ENCODE measurements at regions of chr9 and their contacts with region 1.

Region 1: GRCh38 chr9:132973713-132974112 is 4.8 kb upstream of the GFI1B start:
- DNase-seq: peak; percentile 45 to 56
- ATAC-seq: peak in 1 of 2 experiments; percentile 43; a peak in 3 of 6 replicates
- H3K4me3 ChIP-seq: no peak overlapping the region
- H3K27ac ChIP-seq: no peak overlapping the region
- H3K4me1 ChIP-seq: peaks cover 8% of the 10 kb centered on the region; the same call in 1 of the 3 replicates
- CTCF ChIP-seq: no peak
- EP300 ChIP-seq: no peak
- POLR2A ChIP-seq: no peak
- RAD21 ChIP-seq: no peak

Region 2: DNA sequence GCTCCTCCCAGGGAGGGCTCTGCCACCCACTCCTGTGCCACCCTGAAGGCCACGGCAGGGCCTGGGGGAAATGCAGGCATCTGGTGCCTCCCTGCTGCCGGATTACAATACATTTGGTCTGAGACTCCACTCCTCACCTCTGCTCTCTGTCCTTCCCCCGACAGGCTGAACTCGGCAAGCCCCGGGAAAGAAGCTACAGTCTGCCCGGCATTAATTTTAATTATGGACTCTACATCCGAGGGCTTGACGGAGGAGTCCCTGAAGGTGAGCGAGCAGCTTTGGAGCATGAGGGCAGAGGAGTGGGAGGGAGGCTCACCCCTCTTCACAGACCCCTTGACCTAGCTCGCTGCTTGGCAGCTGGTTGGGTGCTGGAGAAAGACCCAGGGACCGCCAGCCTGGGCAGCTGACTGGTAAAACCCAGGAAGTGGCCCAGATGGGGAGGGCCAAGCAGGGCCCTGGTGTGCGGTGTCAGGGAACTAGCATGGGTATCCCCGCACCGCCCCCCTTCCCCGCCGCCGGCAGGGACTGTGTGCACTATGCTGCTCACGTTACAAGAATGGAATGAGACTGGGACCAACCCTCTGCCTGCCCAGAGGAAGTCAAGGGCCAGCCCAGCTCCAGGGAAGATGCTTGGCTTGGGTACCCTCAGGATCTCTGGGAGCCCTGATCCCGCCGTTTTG is 475.0 kb before region 1 on chr9:
- CTCF ChIA-PET with region 1: no interaction called
- POLR2A ChIA-PET with region 1: no interaction called
- DNase-seq: no peak
- ATAC-seq: no peak; a peak in 2 of 6 replicates
- H3K4me3 ChIP-seq: no peak overlapping the region
- H3K27ac ChIP-seq: no peak overlapping the region
- H3K4me1 ChIP-seq: no peaks in the 10 kb centered on the region
- CTCF ChIP-seq: no peak
- EP300 ChIP-seq: no peak
- POLR2A ChIP-seq: no peak
- RAD21 ChIP-seq: no peak

Region 3: DNA sequence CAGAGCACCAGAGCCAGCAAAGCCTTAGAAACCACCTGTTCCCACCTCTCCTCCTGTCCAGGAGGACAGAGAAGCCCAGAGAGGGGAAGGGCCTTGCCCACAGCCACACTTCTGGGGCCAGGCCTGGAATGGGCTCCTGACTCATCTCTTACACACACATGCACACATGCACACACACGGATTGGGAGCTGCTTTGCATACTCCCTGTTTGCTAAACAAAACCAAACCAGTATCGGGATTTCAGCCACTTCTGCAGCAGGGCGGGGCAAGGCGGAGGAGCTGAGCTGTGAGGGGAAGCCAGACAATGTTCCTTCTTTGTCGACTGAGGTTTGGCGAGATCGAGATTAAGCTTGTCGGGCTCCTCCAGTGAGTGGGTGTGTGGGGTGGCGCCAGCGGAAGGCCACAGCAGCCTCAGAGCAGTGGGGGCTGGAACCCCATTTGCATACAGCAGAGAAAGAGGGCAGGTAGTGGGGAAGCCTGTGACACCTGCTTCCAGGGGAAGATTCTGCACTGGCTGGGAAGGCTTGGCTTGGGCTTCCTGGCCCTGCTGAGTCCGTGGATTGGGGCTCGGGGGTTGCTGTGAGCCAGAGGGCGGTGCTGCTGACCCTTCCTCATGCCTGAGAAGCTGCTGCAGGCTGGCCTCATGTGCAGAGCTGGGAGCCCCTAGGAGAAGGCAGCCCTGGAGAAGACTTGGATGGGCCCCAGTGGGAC is 20.9 kb after region 1 on chr9:
- CTCF ChIA-PET with region 1: interaction called, 40 read pairs
- POLR2A ChIA-PET with region 1: no interaction called
- DNase-seq: peak in 1 of 2 experiments; percentile 29
- ATAC-seq: peak in 1 of 2 experiments; percentile 29; a peak in 2 of 6 replicates
- H3K4me3 ChIP-seq: no peak overlapping the region
- H3K27ac ChIP-seq: no peak overlapping the region
- H3K4me1 ChIP-seq: no peaks in the 10 kb centered on the region
- CTCF ChIP-seq: no peak
- EP300 ChIP-seq: no peak
- POLR2A ChIP-seq: no peak
- RAD21 ChIP-seq: no peak

Region 4: GRCh38 chr9:133004091-133004998 is 30.6 kb after region 1 on chr9:
- CTCF ChIA-PET with region 1: interaction called, 30 read pairs
- POLR2A ChIA-PET with region 1: no interaction called
- DNase-seq: no peak
- ATAC-seq: no peak
- H3K4me3 ChIP-seq: no peak overlapping the region
- H3K27ac ChIP-seq: no peak overlapping the region
- H3K4me1 ChIP-seq: no peaks in the 10 kb centered on the region
- CTCF ChIP-seq: no peak
- EP300 ChIP-seq: no peak
- POLR2A ChIP-seq: no peak
- RAD21 ChIP-seq: no peak

Measured in A549 (cell line).